ENCODE measurements at regions of chr2 and their contacts with region 1.

Region 1: GRCh38 chr2:218301176-218301819 is 9.0 kb upstream of the TMBIM1 start:
- DNase-seq: peak; percentile 92
- H3K4me3 Mint-ChIP-seq: no peak overlapping the region
- H3K27ac Mint-ChIP-seq: peak overlapping the region; percentile 42
- H3K4me1 Mint-ChIP-seq: peaks cover 5% of the 10 kb centered on the region
- H3K27me3 Mint-ChIP-seq: no peaks in the 10 kb centered on the region

Region 2: GRCh38 chr2:218322895-218323808 is 21.9 kb after region 1 on chr2:
- CTCF ChIA-PET with region 1: interaction called, 11 read pairs
- POLR2A ChIA-PET with region 1: no interaction called
- intact Hi-C with region 1: no loop called
- DNase-seq: peak; percentile 42
- H3K4me3 Mint-ChIP-seq: peak overlapping the region; percentile 70
- H3K27ac Mint-ChIP-seq: no peak overlapping the region
- H3K4me1 Mint-ChIP-seq: peaks cover 19% of the 10 kb centered on the region
- H3K27me3 Mint-ChIP-seq: peaks cover 8% of the 10 kb centered on the region

Region 3: DNA sequence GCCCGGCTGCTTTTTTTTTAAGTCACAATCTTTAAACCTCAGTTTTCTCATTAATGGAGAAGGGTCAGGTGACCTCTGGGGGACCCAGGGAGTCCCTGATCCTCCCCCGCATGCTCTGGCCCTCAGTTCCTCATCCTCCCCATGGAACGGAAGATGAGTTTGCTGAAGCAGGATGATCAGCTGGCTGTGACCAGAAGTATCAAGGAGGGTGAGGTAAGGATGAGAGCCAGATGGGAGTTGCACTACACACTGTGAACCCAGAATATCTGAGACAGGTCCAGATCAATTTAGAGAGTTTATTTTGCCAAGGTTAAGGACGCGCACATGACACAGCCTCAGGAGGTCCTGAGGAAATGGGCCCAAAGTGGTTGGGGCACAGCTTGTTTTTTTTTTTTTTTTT is 59.1 kb after region 1 on chr2:
- CTCF ChIA-PET with region 1: interaction called, 59 read pairs
- POLR2A ChIA-PET with region 1: interaction called, 3 read pairs
- intact Hi-C with region 1: loop called (anchors 1 kb)
- DNase-seq: no peak
- H3K4me3 Mint-ChIP-seq: no peak overlapping the region
- H3K27ac Mint-ChIP-seq: no peak overlapping the region
- H3K4me1 Mint-ChIP-seq: no peaks in the 10 kb centered on the region
- H3K27me3 Mint-ChIP-seq: no peaks in the 10 kb centered on the region

Region 4: DNA sequence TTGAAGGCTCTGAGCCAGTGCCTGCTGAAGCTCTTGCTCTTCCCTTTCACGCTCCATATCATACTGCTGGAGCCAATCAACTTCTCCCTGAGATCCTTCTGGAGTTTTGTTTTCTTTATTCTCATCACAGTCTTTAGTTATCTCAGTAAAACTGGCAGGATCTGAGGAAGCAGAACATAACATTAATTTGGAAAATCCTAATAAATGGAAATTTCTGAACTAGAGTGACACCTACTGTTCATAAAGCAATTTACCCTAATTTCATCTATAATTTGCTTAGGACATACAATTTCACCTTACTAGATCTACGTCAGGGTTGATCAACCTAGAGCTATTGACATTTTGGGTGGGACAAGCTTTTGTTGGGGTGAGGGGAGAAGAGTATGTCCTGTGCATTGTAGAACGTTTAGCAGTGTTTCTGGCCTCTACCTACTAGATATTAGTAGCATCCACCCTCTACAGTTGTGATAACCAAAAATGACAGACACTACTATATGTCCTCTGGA is 164.8 kb after region 1 on chr2:
- CTCF ChIA-PET with region 1: interaction called, 7 read pairs
- POLR2A ChIA-PET with region 1: no interaction called
- intact Hi-C with region 1: loop called (anchors 1 kb)
- DNase-seq: no peak
- H3K4me3 Mint-ChIP-seq: no peak overlapping the region
- H3K27ac Mint-ChIP-seq: no peak overlapping the region
- H3K4me1 Mint-ChIP-seq: peaks cover 4% of the 10 kb centered on the region
- H3K27me3 Mint-ChIP-seq: no peaks in the 10 kb centered on the region